ENCODE measurements at regions of chr1 and their contacts with region 1.

Region 1: DNA sequence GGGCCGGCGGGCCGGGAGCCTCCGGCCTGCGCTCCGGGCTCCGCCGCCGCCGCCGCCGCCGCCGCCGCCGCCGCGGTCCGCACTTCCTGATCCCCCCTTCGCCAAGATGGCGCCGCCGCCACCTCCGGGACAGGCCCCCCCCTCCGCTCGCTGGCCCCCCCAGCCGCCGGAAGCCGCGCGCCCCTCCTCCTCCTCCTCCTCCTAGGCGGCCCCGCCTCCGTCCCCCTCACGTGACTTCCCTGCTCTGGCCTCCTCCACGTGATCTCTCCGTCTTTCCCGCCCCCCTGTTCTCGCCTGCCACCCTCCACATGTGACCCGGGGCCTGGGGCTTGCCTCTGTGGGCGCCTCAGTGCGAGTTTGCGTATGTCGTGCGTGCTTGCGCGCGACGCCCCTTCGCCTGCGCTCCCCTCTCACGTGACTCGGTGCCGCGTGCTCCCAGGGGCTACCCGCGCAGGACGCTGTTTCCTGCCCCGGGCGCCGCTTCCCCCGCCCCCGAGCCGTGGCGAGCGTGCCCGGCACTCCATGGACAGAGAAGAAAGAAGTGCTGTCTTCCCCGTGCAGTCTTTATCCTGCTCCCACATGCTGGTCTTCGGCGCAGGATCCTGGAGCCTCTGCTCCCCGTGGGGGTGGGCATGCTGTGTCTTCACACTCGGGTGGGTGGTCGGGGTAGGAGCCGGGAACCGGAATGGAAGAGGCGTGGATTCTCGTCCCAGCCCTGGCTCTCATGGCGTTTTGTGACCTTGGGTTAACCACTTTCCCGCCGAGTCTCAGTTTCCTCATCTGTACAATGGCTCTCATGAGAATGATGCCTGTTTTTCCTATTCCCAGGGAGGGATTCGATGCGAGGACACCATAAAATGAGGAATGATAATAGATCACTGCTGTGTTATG is at the start of gene UBE2Q1:
- DNase-seq: peak; percentile 98
- H3K4me3 ChIP-seq: peak within 1 kb of the TSS; percentile 87 to 94
- H3K27ac ChIP-seq: peak within 1 kb of the TSS; percentile 75 to 96
- H3K4me1 ChIP-seq: peaks cover 7 to 32% of the 10 kb centered on the region in 2 experiments; a peak in 2 of 4 replicates
- H3K27me3 ChIP-seq: no peaks in the 10 kb centered on the region
- CTCF ChIP-seq: no peak
- EP300 ChIP-seq: peak; percentile 36 to 51; a peak in 2 of 4 replicates
- RAD21 ChIP-seq: no peak
- polyA plus RNA-seq, gene UBE2Q1: 12.5 and 15.2 TPM in 2 replicates

Region 2: DNA sequence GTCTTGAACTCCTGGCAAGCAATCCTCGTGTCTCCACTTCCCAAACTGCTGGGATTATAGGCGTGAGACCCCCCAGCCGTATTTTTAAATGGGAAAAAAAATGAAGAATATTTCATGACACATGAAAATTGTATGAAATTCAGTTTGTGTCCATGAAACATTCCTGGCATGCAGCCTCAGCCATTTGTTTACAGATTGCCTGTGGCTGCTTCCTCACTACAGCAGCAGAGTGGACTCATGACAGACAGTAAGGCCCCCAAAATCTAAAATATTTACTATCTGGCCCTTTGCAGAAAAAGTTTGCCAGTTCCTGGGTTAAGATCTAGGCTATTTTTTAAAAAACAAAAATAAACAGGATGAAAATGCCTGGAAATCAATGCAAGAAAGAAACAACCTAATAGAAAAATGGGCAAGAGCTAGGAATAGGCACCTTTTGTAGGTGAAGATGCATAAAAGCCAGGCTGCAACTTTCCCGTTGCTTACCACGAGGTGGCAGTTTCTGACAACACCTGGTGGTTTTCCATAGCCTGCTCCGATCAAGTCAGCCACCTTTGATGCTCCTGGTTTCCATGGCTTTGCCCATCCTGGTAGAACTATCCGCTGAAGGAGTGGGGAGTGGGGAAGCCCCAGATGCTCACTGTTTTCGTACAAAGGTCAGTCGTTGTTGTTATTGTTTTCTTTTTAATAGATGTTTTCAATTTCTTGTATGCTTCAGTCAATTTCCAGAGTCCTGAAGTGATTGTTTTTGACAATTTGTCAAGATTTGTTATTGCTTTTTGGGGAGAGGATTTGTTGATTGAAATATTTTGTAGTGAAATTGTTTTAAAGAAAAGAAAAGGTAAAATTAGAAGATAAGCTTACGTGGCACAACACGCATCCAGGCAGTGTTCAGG is 24.6 kb before region 1 on chr1:
- CTCF ChIA-PET with region 1: interaction called, 16 read pairs
- POLR2A ChIA-PET with region 1: no interaction called
- DNase-seq: peak; percentile 71
- H3K4me3 ChIP-seq: no peak overlapping the region
- H3K27ac ChIP-seq: no peak overlapping the region
- H3K4me1 ChIP-seq: no peaks in the 10 kb centered on the region
- H3K27me3 ChIP-seq: no peaks in the 10 kb centered on the region; the same call in 1 of the 2 replicates
- CTCF ChIP-seq: peak; percentile 50
- EP300 ChIP-seq: no peak
- RAD21 ChIP-seq: peak; percentile 71

Region 3: DNA sequence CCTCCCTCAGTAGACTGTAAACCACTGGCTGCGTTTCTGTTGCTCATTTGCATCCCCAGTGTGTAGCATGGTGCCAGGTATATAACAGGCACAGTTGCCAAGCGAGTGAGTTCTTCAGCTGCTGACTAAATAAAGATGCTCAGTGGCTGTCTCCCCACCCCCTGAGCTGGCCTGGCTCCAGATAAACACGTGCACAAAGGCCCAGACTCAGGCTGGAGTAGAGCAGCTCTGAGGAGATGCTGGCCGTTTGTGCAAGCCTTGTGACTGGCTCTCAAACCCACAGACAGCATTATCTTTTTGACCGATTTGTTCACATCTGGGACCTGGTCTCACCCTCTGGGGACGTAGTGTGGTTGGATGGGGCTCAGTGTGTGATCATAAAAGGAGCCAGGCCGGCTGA is 15.9 kb after region 1 on chr1:
- CTCF ChIA-PET with region 1: interaction called, 41 read pairs
- POLR2A ChIA-PET with region 1: interaction called, 4 read pairs
- DNase-seq: peak; percentile 81
- H3K4me3 ChIP-seq: no peak overlapping the region
- H3K27ac ChIP-seq: peak overlapping the region in 1 of 2 experiments; percentile 62; a peak in 2 of 4 replicates
- H3K4me1 ChIP-seq: peaks cover 0 to 34% of the 10 kb centered on the region in 2 experiments; a peak in 2 of 4 replicates
- H3K27me3 ChIP-seq: no peaks in the 10 kb centered on the region
- CTCF ChIP-seq: no peak
- EP300 ChIP-seq: peak in 1 of 2 experiments; percentile 39; a peak in 2 of 4 replicates
- RAD21 ChIP-seq: no peak

Region 4: DNA sequence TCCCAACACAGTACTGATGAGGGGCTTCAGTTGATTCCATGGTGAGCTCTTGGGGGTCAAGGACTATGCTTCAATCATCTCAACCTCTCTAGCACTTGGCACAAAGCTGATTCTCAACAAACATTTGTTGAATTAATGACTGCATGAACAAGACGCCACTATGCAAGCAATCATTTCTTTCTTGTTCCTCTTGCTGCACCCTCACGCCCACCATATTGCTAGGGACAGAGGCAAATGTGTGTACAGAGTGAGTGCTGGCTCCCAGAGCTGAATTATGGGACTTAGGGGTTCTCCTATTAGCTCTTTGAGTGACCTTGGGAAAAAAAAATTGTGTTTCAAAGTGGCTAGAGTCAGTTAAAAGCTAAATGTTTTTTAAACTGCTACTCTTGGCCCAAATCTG is 46.7 kb after region 1 on chr1:
- CTCF ChIA-PET with region 1: interaction called, 10 read pairs
- POLR2A ChIA-PET with region 1: no interaction called
- DNase-seq: no peak
- H3K4me3 ChIP-seq: no peak overlapping the region
- H3K27ac ChIP-seq: no peak overlapping the region
- H3K4me1 ChIP-seq: peaks cover 11 to 14% of the 10 kb centered on the region in 2 experiments
- H3K27me3 ChIP-seq: no peaks in the 10 kb centered on the region
- CTCF ChIP-seq: no peak
- EP300 ChIP-seq: no peak
- RAD21 ChIP-seq: no peak

Region 5: GRCh38 chr1:154703170-154703569 is 144.3 kb after region 1 on chr1:
- CTCF ChIA-PET with region 1: no interaction called
- POLR2A ChIA-PET with region 1: no interaction called
- DNase-seq: no peak
- H3K4me3 ChIP-seq: no peak overlapping the region
- H3K27ac ChIP-seq: no peak overlapping the region
- H3K4me1 ChIP-seq: no peaks in the 10 kb centered on the region
- H3K27me3 ChIP-seq: no peaks in the 10 kb centered on the region
- CTCF ChIP-seq: no peak
- EP300 ChIP-seq: no peak
- RAD21 ChIP-seq: no peak

Region 6: DNA sequence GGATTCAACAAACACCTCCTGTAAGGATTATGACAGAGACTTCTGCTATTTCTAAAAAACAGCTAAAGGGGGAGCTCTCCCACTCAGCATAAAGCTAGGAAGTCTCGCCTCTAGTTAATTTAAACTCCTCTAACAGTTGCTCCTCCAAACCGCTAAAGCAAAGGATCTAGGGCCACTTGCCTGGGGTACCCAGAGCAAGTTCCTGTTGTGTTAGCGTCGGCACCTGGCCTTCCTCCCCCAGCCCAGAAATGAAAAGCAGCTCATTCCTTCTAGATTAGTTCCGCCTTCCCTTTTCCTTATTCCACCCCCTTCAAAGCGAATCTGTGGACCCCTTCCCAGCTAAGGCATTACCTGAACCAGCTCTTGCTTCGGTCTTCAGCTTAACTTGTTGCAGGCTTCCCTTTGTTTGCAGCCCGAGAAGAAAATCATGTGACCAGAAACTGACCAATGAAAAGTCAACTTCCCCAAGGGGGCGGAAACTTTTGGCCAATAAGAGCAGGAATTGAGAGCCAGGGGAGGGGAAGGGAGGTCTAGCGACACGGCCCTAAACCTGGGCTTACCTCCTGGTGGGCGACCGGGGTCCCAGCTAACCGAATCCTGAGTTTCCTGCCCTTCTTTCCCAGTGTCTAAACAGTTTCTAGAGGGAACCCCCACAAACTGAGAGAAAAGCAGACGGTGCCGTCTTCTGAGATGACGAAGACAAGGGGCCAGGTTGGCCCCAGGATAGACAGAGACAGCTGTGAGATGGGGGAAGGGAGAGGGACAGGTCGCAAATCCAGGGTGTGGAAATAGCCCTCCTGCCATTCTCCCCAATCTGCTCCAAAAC is 397.1 kb after region 1 on chr1 and contains the start of gene PBXIP1:
- CTCF ChIA-PET with region 1: interaction called, 10 read pairs
- POLR2A ChIA-PET with region 1: no interaction called
- DNase-seq: peak; percentile 94
- H3K4me3 ChIP-seq: peak within 1 kb of the TSS; percentile 74 to 79
- H3K27ac ChIP-seq: peak within 1 kb of the TSS; percentile 90 to 91
- H3K4me1 ChIP-seq: peaks cover 0 to 51% of the 10 kb centered on the region in 2 experiments; a peak in 3 of 4 replicates
- H3K27me3 ChIP-seq: no peaks in the 10 kb centered on the region
- CTCF ChIP-seq: peak; percentile 53
- EP300 ChIP-seq: no peak
- RAD21 ChIP-seq: peak; percentile 55
- polyA plus RNA-seq, gene PBXIP1: 55.9 and 64.3 TPM in 2 replicates